ENCODE measurements at regions of chr5 and their contacts with region 1.

Region 1: GRCh38 chr5:76733049-76733417 is 17.1 kb downstream of the F2R start:
- DNase-seq: peak; percentile 65 to 88 (median 70)
- H3K4me3 ChIP-seq: peak overlapping the region in 1 of 2 donors; percentile 8
- H3K4me3 Mint-ChIP-seq: peak overlapping the region; percentile 44 to 80 (median 78)
- H3K27ac ChIP-seq: peak overlapping the region; percentile 65
- H3K27ac Mint-ChIP-seq: peak overlapping the region; percentile 77 to 95 (median 90)
- H3K4me1 ChIP-seq: peaks cover 48% of the 10 kb centered on the region
- H3K4me1 Mint-ChIP-seq: peaks cover 18 to 48% (median 32%) of the 10 kb centered on the region in 4 donors
- H3K27me3 ChIP-seq: no peaks in the 10 kb centered on the region
- H3K27me3 Mint-ChIP-seq: no peaks in the 10 kb centered on the region

Region 2: GRCh38 chr5:76715736-76716455 is 17.1 kb before region 1 on chr5 and contains the start of gene F2R:
- CTCF ChIA-PET with region 1: interaction called, 40 read pairs
- POLR2A ChIA-PET with region 1: interaction called, 41 read pairs
- intact Hi-C with region 1: loop called (anchors 1 kb)
- DNase-seq: peak; percentile 51 to 58 (median 57)
- H3K4me3 ChIP-seq: peak within 1 kb of the TSS in 1 of 2 donors; percentile 75
- H3K4me3 Mint-ChIP-seq: peak within 1 kb of the TSS; percentile 67 to 90 (median 86)
- H3K27ac ChIP-seq: peak within 1 kb of the TSS; percentile 51
- H3K27ac Mint-ChIP-seq: peak within 1 kb of the TSS; percentile 22 to 80 (median 66)
- H3K4me1 ChIP-seq: peaks cover 26% of the 10 kb centered on the region
- H3K4me1 Mint-ChIP-seq: peaks cover 13 to 43% (median 24%) of the 10 kb centered on the region in 4 donors
- H3K27me3 ChIP-seq: no peaks in the 10 kb centered on the region
- H3K27me3 Mint-ChIP-seq: peaks cover 0 to 7% of the 10 kb centered on the region in 2 donors
- total RNA-seq, gene F2R: 12.4 to 14.6 TPM

Region 3: DNA sequence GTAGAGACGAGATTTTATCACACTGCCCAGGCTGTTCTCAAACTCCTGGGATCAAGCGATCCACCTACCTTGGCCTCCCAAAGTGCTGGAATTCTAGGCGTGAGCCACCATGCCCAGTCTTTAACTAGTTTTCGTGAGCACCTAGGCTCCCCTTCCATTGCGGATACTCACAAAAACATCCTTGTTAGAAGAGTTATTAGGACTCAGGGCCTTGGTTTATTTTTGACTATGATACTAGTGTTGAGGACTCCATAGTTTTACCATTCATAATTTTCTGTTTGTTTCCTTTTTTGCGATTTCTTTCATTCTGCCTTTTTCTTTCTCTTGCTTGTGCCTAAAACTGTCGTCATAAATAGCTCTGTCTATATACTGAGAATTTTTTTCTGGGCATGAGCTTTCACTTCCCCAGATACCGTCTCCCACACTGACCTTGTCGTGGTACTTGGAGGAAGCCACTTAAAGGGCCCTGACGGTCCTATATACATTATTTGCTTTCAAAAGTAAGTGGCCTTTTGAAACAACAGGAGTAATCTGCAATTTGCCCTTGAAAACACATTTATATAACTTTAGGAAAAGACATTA is 12.0 kb before region 1 on chr5:
- CTCF ChIA-PET with region 1: interaction called, 40 read pairs
- POLR2A ChIA-PET with region 1: interaction called, 41 read pairs
- intact Hi-C with region 1: loop called (anchors 1 kb)
- DNase-seq: no peak
- H3K4me3 ChIP-seq: no peak overlapping the region
- H3K4me3 Mint-ChIP-seq: peak overlapping the region in 3 of 8 donors; percentile 4 to 25 (median 13)
- H3K27ac ChIP-seq: no peak overlapping the region
- H3K27ac Mint-ChIP-seq: peak overlapping the region in 3 of 7 donors; percentile 17 to 73 (median 34)
- H3K4me1 ChIP-seq: peaks cover 15% of the 10 kb centered on the region
- H3K4me1 Mint-ChIP-seq: peaks cover 9 to 25% (median 19%) of the 10 kb centered on the region in 4 donors
- H3K27me3 ChIP-seq: no peaks in the 10 kb centered on the region
- H3K27me3 Mint-ChIP-seq: peaks cover 0 to 4% of the 10 kb centered on the region in 2 donors

Region 4: GRCh38 chr5:77379558-77380061 is 646.6 kb after region 1 on chr5:
- CTCF ChIA-PET with region 1: no interaction called
- POLR2A ChIA-PET with region 1: no interaction called
- intact Hi-C with region 1: no loop called
- DNase-seq: peak in 4 of 5 donors; percentile 45 to 67 (median 53)
- H3K4me3 ChIP-seq: no peak overlapping the region
- H3K4me3 Mint-ChIP-seq: peak overlapping the region in 7 of 8 donors; percentile 1 to 66 (median 23)
- H3K27ac ChIP-seq: no peak overlapping the region
- H3K27ac Mint-ChIP-seq: peak overlapping the region; percentile 68 to 93 (median 83)
- H3K4me1 ChIP-seq: peaks cover 26% of the 10 kb centered on the region
- H3K4me1 Mint-ChIP-seq: peaks cover 17 to 24% (median 19%) of the 10 kb centered on the region in 4 donors
- H3K27me3 ChIP-seq: no peaks in the 10 kb centered on the region
- H3K27me3 Mint-ChIP-seq: peaks cover 0 to 2% of the 10 kb centered on the region in 2 donors

Region 5: DNA sequence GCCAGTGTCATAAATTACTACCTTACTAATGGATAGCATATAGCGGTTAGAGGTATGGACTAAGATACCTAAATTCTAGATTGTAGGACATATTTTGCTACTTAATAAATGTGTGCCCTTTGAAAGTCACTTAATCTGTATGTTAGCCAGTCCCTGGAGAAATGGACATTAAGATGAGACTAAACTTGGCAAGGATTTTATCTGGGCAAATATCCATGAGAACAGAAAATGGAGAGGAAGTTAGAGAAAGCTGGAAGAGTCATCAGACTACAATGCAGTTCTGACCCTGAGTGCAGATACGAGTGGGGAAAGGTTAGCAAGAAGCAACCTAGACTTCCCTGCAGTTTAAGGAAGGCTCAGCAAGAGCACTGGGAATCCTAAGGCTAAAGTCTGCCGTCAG is 1010.1 kb after region 1 on chr5:
- CTCF ChIA-PET with region 1: no interaction called
- POLR2A ChIA-PET with region 1: no interaction called
- intact Hi-C with region 1: no loop called
- DNase-seq: no peak
- H3K4me3 ChIP-seq: no peak overlapping the region
- H3K4me3 Mint-ChIP-seq: no peak overlapping the region
- H3K27ac ChIP-seq: no peak overlapping the region
- H3K27ac Mint-ChIP-seq: no peak overlapping the region
- H3K4me1 ChIP-seq: no peaks in the 10 kb centered on the region
- H3K4me1 Mint-ChIP-seq: peaks cover 10 to 15% (median 13%) of the 10 kb centered on the region in 4 donors
- H3K27me3 ChIP-seq: no peaks in the 10 kb centered on the region
- H3K27me3 Mint-ChIP-seq: no peaks in the 10 kb centered on the region